Naive thymus-derived CD8-positive, alpha-beta T cell (primary cell): ENCODE measurements at regions of chr6 and their contacts with region 1.

Region 1: GRCh38 chr6:474453-475185 is 83.1 kb downstream of the IRF4 start:
- DNase-seq: peak; percentile 34 to 86 (median 65)
- ATAC-seq: peak; percentile 99 to 100
- H3K4me3 Mint-ChIP-seq: peak overlapping the region; percentile 63 to 84 (median 76)
- H3K27ac Mint-ChIP-seq: peak overlapping the region; percentile 37 to 88 (median 70)
- H3K4me1 Mint-ChIP-seq: peaks cover 15 to 50% (median 46%) of the 10 kb centered on the region in 4 donors
- H3K27me3 Mint-ChIP-seq: no peaks in the 10 kb centered on the region

Region 2: DNA sequence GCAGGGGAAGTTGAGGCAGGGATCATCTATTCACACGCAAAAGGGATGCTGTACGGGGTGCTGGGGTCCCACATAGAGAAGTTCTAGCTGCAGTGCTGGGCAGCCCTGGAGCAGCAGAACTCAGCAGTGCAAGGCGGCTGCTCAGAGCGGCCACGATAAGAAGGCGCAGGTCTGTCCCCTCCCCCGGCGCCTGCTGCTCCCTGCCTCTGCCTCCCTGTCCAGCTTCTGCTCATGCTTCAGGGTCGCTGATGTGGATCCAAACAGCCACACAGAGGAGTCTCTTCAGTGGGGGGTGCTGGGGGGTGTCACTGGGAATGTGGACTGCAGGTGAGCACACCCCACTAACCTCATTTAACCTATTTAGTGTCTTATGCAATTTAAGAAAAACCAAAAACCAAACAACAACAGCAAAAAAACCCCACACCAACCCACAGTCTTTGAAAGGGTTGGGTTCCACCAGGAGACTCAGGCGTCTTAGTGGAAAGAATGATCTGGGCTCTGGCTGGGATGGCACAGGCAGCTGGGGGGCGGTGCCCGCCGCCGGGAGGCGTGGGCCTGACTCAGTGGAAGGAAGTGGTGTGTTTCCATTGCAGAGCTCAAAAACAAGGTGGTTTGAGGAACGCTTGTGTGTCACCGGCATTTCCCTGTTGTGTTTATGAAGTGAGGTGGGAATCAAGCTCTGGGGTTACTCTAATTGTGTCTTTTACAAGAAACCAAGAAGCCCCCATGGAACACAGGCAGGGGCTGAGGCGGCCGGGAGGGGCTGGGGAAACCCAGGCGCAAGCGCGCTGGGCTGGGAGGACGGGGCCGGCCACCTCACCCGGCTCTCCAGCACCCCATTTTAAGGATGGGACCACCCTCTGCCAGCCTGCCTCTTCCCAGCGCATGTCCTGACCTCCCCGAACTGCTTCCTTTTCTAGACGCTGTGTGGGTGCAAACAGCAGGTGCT is 27.9 kb before region 1 on chr6:
- POLR2A ChIA-PET with region 1: interaction called, 14 read pairs
- DNase-seq: peak; percentile 44 to 80 (median 64)
- ATAC-seq: peak; percentile 71 to 77
- H3K4me3 Mint-ChIP-seq: peak overlapping the region; percentile 54 to 83 (median 70)
- H3K27ac Mint-ChIP-seq: peak overlapping the region; percentile 41 to 86 (median 68)
- H3K4me1 Mint-ChIP-seq: peaks cover 31 to 60% (median 46%) of the 10 kb centered on the region in 4 donors
- H3K27me3 Mint-ChIP-seq: no peaks in the 10 kb centered on the region

Region 3: DNA sequence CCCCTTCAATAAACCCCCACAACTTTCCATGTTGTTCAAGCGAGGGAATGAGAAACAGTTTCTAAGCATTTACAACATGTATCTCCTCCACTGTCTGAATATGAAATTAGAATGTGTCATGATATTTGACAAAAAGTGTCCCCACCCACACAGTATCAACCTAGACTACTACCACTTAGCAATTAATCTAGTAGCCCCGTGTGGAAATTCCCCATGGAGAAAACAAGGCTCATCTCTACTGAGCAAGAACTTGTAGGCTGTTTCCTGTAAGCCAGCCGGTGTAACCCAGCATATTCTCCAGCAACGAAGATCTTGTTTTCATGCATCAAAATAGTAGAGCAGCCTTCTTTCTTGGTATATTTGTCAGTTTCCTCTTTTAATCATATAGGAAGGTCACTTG is 31.9 kb after region 1 on chr6:
- POLR2A ChIA-PET with region 1: no interaction called
- DNase-seq: no peak
- ATAC-seq: no peak
- H3K4me3 Mint-ChIP-seq: no peak overlapping the region
- H3K27ac Mint-ChIP-seq: peak overlapping the region in 6 of 10 donors; percentile 3 to 73 (median 39)
- H3K4me1 Mint-ChIP-seq: peaks cover 33 to 68% (median 67%) of the 10 kb centered on the region in 4 donors
- H3K27me3 Mint-ChIP-seq: no peaks in the 10 kb centered on the region

Region 4: GRCh38 chr6:572596-573265 is 98.1 kb after region 1 on chr6:
- POLR2A ChIA-PET with region 1: no interaction called
- DNase-seq: no peak
- ATAC-seq: no peak
- H3K4me3 Mint-ChIP-seq: no peak overlapping the region
- H3K27ac Mint-ChIP-seq: no peak overlapping the region
- H3K4me1 Mint-ChIP-seq: peaks cover 0 to 4% (median 2%) of the 10 kb centered on the region in 4 donors
- H3K27me3 Mint-ChIP-seq: no peaks in the 10 kb centered on the region